Tibial artery (tissue), 4 donors: ENCODE measurements at regions of chr1 and their contacts with region 1.

Region 1: DNA sequence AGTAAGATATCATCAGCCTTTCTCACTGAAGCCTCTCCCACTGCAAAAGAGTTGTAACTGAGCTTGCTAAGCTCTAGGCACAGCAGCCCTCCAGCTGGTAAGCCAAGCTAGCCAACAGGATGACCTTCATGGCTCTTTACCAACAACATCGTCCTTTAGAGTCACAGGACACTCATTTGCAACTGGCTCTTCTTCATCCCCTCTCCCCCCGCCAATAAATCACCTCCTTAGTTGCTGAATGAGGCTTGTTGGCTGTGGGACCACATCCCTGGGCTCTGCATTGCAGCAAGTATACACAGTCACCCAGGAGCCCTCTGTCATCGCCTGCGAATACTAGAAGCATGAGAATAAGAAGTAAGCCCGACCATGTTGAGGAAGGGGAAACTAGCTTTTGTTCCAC is 16.0 kb upstream of the ZNF697 start:
- DNase-seq: no peak
- H3K4me3 ChIP-seq: no peak overlapping the region
- H3K27ac ChIP-seq: no peak overlapping the region
- H3K4me1 ChIP-seq: no peaks in the 10 kb centered on the region
- H3K27me3 ChIP-seq: no peaks in the 10 kb centered on the region
- CTCF ChIP-seq: no peak

Region 2: GRCh38 chr1:119613769-119614720 is 50.0 kb before region 1 on chr1:
- intact Hi-C with region 1: loop called (anchors 2 kb)
- DNase-seq: peak; percentile 85 to 89
- H3K4me3 ChIP-seq: no peak overlapping the region
- H3K27ac ChIP-seq: no peak overlapping the region
- H3K4me1 ChIP-seq: no peaks in the 10 kb centered on the region
- H3K27me3 ChIP-seq: no peaks in the 10 kb centered on the region
- CTCF ChIP-seq: peak; percentile 76